MCF 10A (cell line): ENCODE measurements at regions of chr19 and their contacts with region 1.

Region 1: GRCh38 chr19:16111160-16111908 is at the start of gene RAB8A:
- DNase-seq: peak; percentile 99
- H3K4me3 Mint-ChIP-seq: peak within 1 kb of the TSS; percentile 90
- H3K27ac Mint-ChIP-seq: peak within 1 kb of the TSS; percentile 94
- H3K4me1 Mint-ChIP-seq: no peaks in the 10 kb centered on the region
- H3K27me3 Mint-ChIP-seq: no peaks in the 10 kb centered on the region
- CTCF ChIP-seq: peak; percentile 91
- total RNA-seq, gene RAB8A: 41.6 and 50.1 TPM in 2 replicates

Region 2: GRCh38 chr19:16062789-16063188 is 48.5 kb before region 1 on chr19:
- CTCF ChIA-PET with region 1: interaction called, 19 read pairs
- POLR2A ChIA-PET with region 1: interaction called, 8 read pairs
- intact Hi-C with region 1: loop called (anchors 2 kb)
- DNase-seq: peak; percentile 57
- H3K4me3 Mint-ChIP-seq: no peak overlapping the region
- H3K27ac Mint-ChIP-seq: peak overlapping the region; percentile 57
- H3K4me1 Mint-ChIP-seq: peaks cover 12% of the 10 kb centered on the region
- H3K27me3 Mint-ChIP-seq: no peaks in the 10 kb centered on the region
- CTCF ChIP-seq: peak; percentile 87

Region 3: GRCh38 chr19:16070366-16070990 is 40.9 kb before region 1 on chr19:
- CTCF ChIA-PET with region 1: interaction called, 19 read pairs
- POLR2A ChIA-PET with region 1: interaction called, 8 read pairs
- intact Hi-C with region 1: loop called (anchors 1 kb)
- DNase-seq: peak; percentile 85
- H3K4me3 Mint-ChIP-seq: no peak overlapping the region
- H3K27ac Mint-ChIP-seq: no peak overlapping the region
- H3K4me1 Mint-ChIP-seq: peaks cover 6% of the 10 kb centered on the region
- H3K27me3 Mint-ChIP-seq: no peaks in the 10 kb centered on the region
- CTCF ChIP-seq: no peak

Region 4: GRCh38 chr19:16076154-16076957 is 35.0 kb before region 1 on chr19 and contains the start of gene TPM4:
- CTCF ChIA-PET with region 1: interaction called, 6 read pairs
- POLR2A ChIA-PET with region 1: interaction called, 12 read pairs
- intact Hi-C with region 1: no loop called
- DNase-seq: peak; percentile 94
- H3K4me3 Mint-ChIP-seq: peak within 1 kb of the TSS; percentile 71
- H3K27ac Mint-ChIP-seq: peak within 1 kb of the TSS; percentile 99
- H3K4me1 Mint-ChIP-seq: peaks cover 19% of the 10 kb centered on the region
- H3K27me3 Mint-ChIP-seq: no peaks in the 10 kb centered on the region
- CTCF ChIP-seq: no peak
- total RNA-seq, gene TPM4: 355 and 424 TPM in 2 replicates

Region 5: DNA sequence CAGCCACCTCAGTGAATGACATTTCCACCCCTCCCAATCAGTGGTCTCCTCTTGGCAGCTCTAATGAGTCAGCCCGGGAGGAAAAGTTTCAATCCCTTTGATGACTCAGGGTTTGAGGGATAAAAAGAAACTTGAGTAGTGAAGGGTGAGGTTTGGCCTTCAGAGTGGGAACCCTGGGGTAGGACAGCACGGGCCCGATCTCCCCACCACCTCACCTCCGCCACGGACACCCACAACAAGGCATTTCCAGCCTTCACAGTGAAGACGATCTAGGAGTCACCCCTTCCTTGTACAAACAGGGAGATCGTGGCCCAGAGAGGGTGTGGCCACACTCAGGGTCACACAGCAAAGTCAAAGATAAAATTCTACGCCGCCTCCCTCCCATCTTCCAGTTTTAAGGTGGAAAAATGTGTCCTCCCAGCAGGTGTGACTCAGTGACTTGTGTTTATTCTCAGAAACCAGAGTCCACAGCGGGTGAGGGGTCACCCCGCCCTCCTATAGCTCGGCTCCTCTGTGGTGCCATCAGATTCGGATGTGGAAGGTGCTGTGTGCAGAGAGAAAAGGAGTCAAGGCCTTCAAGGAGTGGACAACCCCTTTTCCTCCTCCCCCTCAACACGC is 49.7 kb after region 1 on chr19:
- CTCF ChIA-PET with region 1: no interaction called
- POLR2A ChIA-PET with region 1: no interaction called
- intact Hi-C with region 1: loop called (anchors 2 kb)
- DNase-seq: peak; percentile 93
- H3K4me3 Mint-ChIP-seq: no peak overlapping the region
- H3K27ac Mint-ChIP-seq: peak overlapping the region; percentile 63
- H3K4me1 Mint-ChIP-seq: peaks cover 14% of the 10 kb centered on the region
- H3K27me3 Mint-ChIP-seq: no peaks in the 10 kb centered on the region
- CTCF ChIP-seq: no peak

Region 6: DNA sequence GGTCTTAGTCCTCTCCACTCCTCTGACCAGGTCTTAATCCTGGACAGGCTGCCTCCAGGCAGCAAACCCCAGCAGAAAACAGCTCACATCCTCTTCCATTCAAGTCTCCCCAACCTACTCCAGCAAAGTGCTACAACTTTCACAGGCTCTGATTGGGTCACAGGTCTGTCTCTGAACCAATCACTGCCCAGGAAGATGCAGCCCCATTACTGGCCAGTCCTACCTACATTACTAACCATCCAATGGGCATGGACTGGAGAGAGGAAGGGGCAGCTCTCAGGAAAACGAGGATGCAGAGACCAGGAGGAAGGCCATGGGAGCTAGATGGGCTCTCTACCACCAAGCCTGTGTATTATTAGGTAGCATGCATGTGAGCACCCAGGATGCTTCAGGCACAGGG is 504.5 kb after region 1 on chr19:
- CTCF ChIA-PET with region 1: no interaction called
- POLR2A ChIA-PET with region 1: no interaction called
- intact Hi-C with region 1: no loop called
- DNase-seq: no peak
- H3K4me3 Mint-ChIP-seq: no peak overlapping the region
- H3K27ac Mint-ChIP-seq: no peak overlapping the region
- H3K4me1 Mint-ChIP-seq: peaks cover 45% of the 10 kb centered on the region
- H3K27me3 Mint-ChIP-seq: no peaks in the 10 kb centered on the region
- CTCF ChIP-seq: no peak